ENCODE measurements at regions of chr5 and their contacts with region 1.

Region 1: GRCh38 chr5:139560752-139561654 is at the start of gene UBE2D2:
- DNase-seq: peak; percentile 92 to 100 (median 96)
- ATAC-seq: peak; percentile 85 to 89 (median 86)
- H3K4me3 ChIP-seq: peak within 1 kb of the TSS; percentile 70 to 71
- H3K4me3 Mint-ChIP-seq: peak within 1 kb of the TSS; percentile 98 to 99 (median 98)
- H3K27ac ChIP-seq: peak within 1 kb of the TSS; percentile 84
- H3K27ac Mint-ChIP-seq: peak within 1 kb of the TSS; percentile 96 to 98
- H3K4me1 ChIP-seq: peaks cover 25 to 32% of the 10 kb centered on the region in 2 experiments
- H3K4me1 Mint-ChIP-seq: peaks cover 40 to 45% (median 43%) of the 10 kb centered on the region in 3 donors
- H3K27me3 ChIP-seq: no peaks in the 10 kb centered on the region
- H3K27me3 Mint-ChIP-seq: no peaks in the 10 kb centered on the region
- total RNA-seq, gene UBE2D2: 138 to 176 (median 152) TPM

Region 2: GRCh38 chr5:139197710-139198669 is 363.0 kb before region 1 on chr5 and contains the start of gene SIL1:
- CTCF ChIA-PET with region 1: no interaction called
- POLR2A ChIA-PET with region 1: no interaction called
- DNase-seq: peak; percentile 88 to 97 (median 94)
- ATAC-seq: peak; percentile 98 to 99 (median 99)
- H3K4me3 ChIP-seq: peak within 1 kb of the TSS; percentile 41 to 62
- H3K4me3 Mint-ChIP-seq: peak within 1 kb of the TSS; percentile 88 to 91 (median 89)
- H3K27ac ChIP-seq: peak within 1 kb of the TSS; percentile 73
- H3K27ac Mint-ChIP-seq: peak within 1 kb of the TSS; percentile 89 to 96
- H3K4me1 ChIP-seq: peaks cover 0 to 21% of the 10 kb centered on the region in 2 experiments
- H3K4me1 Mint-ChIP-seq: peaks cover 19 to 26% (median 21%) of the 10 kb centered on the region in 3 donors
- H3K27me3 ChIP-seq: no peaks in the 10 kb centered on the region
- H3K27me3 Mint-ChIP-seq: no peaks in the 10 kb centered on the region
- total RNA-seq, gene SIL1: 14.2 to 16.5 (median 15.8) TPM

Region 3: GRCh38 chr5:139306197-139306596 is 254.8 kb before region 1 on chr5:
- CTCF ChIA-PET with region 1: interaction called in 1 of 2 experiments, 5 read pairs
- POLR2A ChIA-PET with region 1: interaction called, 3 to 10 read pairs
- DNase-seq: no peak
- ATAC-seq: peak in 2 of 4 experiments; percentile 18 to 44
- H3K4me3 ChIP-seq: no peak overlapping the region
- H3K4me3 Mint-ChIP-seq: peak overlapping the region in 2 of 3 donors; percentile 22 to 60
- H3K27ac ChIP-seq: peak overlapping the region; percentile 7
- H3K27ac Mint-ChIP-seq: peak overlapping the region; percentile 16 to 50
- H3K4me1 ChIP-seq: peaks cover 34 to 48% of the 10 kb centered on the region in 2 experiments
- H3K4me1 Mint-ChIP-seq: peaks cover 92 to 95% (median 94%) of the 10 kb centered on the region in 3 donors
- H3K27me3 ChIP-seq: no peaks in the 10 kb centered on the region
- H3K27me3 Mint-ChIP-seq: no peaks in the 10 kb centered on the region

Region 4: DNA sequence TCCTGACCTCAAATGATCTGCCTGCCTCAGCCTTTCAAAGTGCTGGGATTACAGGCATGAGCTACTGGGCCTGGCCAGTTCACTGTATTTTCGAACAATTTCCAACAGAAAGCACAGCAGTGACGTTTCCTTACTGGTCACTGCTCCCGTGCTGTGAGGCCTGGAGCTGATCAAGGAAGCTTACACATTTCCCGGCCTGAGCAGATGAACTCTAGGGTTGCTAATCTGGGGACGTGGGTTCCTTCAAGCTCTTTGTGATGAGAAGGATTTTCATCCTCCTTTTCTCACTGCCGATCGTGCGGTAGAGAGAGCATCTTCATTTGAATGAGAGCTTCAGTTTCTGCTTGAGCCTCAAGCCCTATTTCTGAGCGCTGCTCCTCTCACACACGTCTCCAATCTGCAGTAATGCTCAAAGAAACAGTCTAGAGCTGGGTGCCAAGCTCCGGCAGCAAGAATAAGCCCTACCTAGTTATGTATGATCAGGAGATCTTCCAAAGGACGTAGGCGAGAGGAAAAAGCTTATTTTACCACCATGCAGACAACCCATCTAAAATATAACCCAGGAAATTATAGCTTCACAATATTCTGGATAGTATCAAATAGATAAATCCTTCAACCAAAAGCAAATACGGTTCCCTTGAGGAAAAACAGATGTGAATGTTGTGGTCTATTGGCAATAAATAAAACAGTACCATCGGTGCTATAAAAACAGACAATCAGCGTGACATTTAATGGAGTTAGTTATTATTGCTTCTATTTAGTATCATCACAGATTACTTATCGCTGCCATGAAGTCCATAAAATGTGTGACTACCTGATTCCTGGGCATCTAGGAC is 149.8 kb before region 1 on chr5:
- CTCF ChIA-PET with region 1: interaction called in 1 of 2 experiments, 14 read pairs
- POLR2A ChIA-PET with region 1: no interaction called
- DNase-seq: no peak
- ATAC-seq: no peak
- H3K4me3 ChIP-seq: no peak overlapping the region
- H3K4me3 Mint-ChIP-seq: no peak overlapping the region
- H3K27ac ChIP-seq: no peak overlapping the region
- H3K27ac Mint-ChIP-seq: no peak overlapping the region
- H3K4me1 ChIP-seq: peaks cover 10 to 20% of the 10 kb centered on the region in 2 experiments
- H3K4me1 Mint-ChIP-seq: peaks cover 22 to 39% (median 27%) of the 10 kb centered on the region in 3 donors
- H3K27me3 ChIP-seq: no peaks in the 10 kb centered on the region
- H3K27me3 Mint-ChIP-seq: no peaks in the 10 kb centered on the region

Region 5: GRCh38 chr5:139574641-139575312 is 13.8 kb after region 1 on chr5:
- CTCF ChIA-PET with region 1: interaction called, 7 to 36 read pairs
- POLR2A ChIA-PET with region 1: interaction called, 4 to 7 read pairs
- DNase-seq: peak in 9 of 35 experiments; percentile 5 to 71 (median 24)
- ATAC-seq: peak; percentile 44 to 59 (median 49)
- H3K4me3 ChIP-seq: no peak overlapping the region
- H3K4me3 Mint-ChIP-seq: peak overlapping the region in 2 of 3 donors; percentile 2 to 58
- H3K27ac ChIP-seq: peak overlapping the region; percentile 22
- H3K27ac Mint-ChIP-seq: peak overlapping the region; percentile 82 to 93
- H3K4me1 ChIP-seq: peaks cover 57 to 72% of the 10 kb centered on the region in 2 experiments
- H3K4me1 Mint-ChIP-seq: peaks cover 70 to 79% (median 77%) of the 10 kb centered on the region in 3 donors
- H3K27me3 ChIP-seq: no peaks in the 10 kb centered on the region
- H3K27me3 Mint-ChIP-seq: no peaks in the 10 kb centered on the region

Region 6: DNA sequence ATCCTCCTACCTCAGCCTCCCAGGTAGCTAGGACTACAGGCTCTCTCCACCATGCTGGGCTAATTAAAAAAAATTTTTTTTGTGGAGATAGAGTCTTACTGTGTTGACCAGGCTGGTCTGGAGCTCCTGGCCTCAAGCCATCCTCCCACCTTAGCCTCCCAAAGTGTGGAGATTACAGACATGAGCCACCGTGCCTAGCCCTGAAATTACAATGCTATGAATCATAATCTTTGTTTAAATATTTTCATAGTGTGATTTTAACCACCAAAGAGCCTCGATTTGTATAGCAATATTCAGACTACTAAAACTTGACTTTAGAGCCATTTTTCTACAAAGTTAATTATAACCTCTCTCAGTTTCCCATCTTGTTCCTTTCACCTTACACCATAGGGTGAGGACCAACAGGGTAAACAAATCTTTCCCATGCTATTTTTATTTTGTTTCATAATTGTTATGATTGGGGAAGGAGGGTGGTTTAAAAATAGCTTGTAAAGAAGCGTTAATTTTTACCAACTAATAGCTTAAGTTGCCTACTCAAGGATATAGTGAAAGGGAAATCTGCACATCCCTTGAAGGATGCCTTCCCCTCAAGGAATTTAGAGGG is 32.8 kb after region 1 on chr5:
- CTCF ChIA-PET with region 1: no interaction called
- POLR2A ChIA-PET with region 1: interaction called, 7 to 19 read pairs
- DNase-seq: no peak
- ATAC-seq: no peak
- H3K4me3 ChIP-seq: no peak overlapping the region
- H3K4me3 Mint-ChIP-seq: no peak overlapping the region
- H3K27ac ChIP-seq: no peak overlapping the region
- H3K27ac Mint-ChIP-seq: peak overlapping the region in 1 of 2 donors; percentile 6
- H3K4me1 ChIP-seq: peaks cover 7 to 37% of the 10 kb centered on the region in 2 experiments
- H3K4me1 Mint-ChIP-seq: peaks cover 60 to 66% (median 63%) of the 10 kb centered on the region in 3 donors
- H3K27me3 ChIP-seq: no peaks in the 10 kb centered on the region
- H3K27me3 Mint-ChIP-seq: no peaks in the 10 kb centered on the region

Region 7: GRCh38 chr5:139600336-139600949 is 39.4 kb after region 1 on chr5:
- CTCF ChIA-PET with region 1: interaction called in 1 of 2 experiments, 10 read pairs
- POLR2A ChIA-PET with region 1: interaction called, 7 to 19 read pairs
- DNase-seq: no peak
- ATAC-seq: no peak
- H3K4me3 ChIP-seq: no peak overlapping the region
- H3K4me3 Mint-ChIP-seq: no peak overlapping the region
- H3K27ac ChIP-seq: no peak overlapping the region
- H3K27ac Mint-ChIP-seq: peak overlapping the region in 1 of 2 donors; percentile 27
- H3K4me1 ChIP-seq: peaks cover 3 to 15% of the 10 kb centered on the region in 2 experiments
- H3K4me1 Mint-ChIP-seq: peaks cover 14 to 27% (median 22%) of the 10 kb centered on the region in 3 donors
- H3K27me3 ChIP-seq: no peaks in the 10 kb centered on the region
- H3K27me3 Mint-ChIP-seq: no peaks in the 10 kb centered on the region

Measured in T-cell (primary cell).